ENCODE measurements at regions of chr5 and their contacts with region 1.

Region 1: DNA sequence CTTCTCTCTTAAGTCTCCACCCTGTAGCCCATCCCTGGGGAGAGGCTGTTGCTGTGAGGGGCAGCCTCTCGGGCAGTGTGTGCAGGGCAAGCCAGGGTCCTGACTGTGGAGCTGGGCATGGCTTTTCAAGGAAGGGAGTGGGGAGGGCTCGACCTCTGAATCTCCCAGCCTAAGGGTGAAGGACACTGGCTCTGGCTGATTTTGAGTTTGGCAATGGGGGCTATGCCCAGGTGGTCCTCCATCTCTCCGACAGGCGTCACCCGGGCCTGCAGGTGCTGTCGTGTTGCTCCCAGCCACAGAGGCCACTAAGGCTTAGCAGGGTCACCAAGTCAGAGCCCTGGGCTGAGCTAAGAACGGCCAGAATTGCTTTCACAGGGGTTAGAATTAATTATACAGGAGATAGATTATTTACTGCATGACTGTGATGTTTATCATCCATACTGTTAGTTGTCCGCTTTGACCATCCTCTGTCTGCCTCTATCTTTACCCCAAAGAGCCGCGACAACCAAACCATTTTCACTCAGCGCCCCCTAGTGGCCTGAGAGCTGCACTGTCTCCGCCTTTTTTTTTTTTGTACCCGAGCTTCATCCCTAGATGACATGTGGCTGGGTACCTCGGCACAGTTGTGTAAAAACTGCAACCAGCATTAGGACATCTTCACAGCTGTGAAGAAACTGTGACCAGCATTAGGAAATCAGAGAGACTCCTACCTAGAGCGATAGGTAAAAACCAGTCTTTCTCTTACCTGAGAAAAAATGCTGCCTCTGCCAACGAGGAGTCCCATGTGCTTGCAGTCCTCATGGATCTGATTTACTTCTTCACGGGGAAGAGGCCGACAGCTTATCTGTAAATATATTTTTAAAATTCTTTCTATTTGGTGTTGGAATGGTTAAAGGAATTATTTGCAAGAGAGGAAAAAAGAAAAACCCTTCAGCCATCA is 44.5 kb downstream of the AGXT2 start:
- DNase-seq: peak; percentile 79
- CTCF ChIP-seq: peak; percentile 72

Region 2: DNA sequence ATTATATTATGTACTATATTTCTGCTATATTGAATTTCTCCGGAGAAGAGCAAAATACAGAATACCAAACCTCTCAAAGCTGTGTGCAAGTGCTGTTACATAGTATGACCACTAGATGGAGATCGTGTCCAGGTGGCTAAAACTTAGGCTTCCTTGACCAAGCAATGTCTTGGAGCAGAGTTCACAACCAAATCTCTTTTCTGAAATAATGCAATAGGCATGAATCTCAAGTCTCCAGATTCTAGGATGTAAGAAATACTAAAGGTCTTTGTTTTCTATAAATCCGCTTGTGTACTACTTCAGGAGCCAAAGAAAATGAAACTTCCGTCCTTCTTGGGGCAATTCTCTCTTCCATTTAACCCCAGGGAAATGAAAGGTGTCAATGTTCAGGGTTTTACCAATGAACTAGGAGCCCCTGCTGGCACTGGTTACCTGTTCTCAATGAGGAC is 528.7 kb before region 1 on chr5:
- CTCF ChIA-PET with region 1: interaction called, 28 read pairs
- POLR2A ChIA-PET with region 1: no interaction called
- DNase-seq: peak; percentile 58
- CTCF ChIP-seq: peak; percentile 91

Region 3: GRCh38 chr5:34915139-34915855 is 88.0 kb before region 1 on chr5 and contains the starts of genes BRIX1 and RAD1:
- CTCF ChIA-PET with region 1: interaction called, 11 read pairs
- POLR2A ChIA-PET with region 1: no interaction called
- DNase-seq: peak; percentile 92
- CTCF ChIP-seq: no peak

Region 4: GRCh38 chr5:34977934-34978613 is 25.2 kb before region 1 on chr5:
- CTCF ChIA-PET with region 1: interaction called, 15 read pairs
- POLR2A ChIA-PET with region 1: no interaction called
- DNase-seq: peak; percentile 29
- CTCF ChIP-seq: no peak

Region 5: GRCh38 chr5:35016174-35017051 is 13.1 kb after region 1 on chr5:
- CTCF ChIA-PET with region 1: interaction called, 15 read pairs
- POLR2A ChIA-PET with region 1: no interaction called
- DNase-seq: no peak
- CTCF ChIP-seq: no peak

Region 6: DNA sequence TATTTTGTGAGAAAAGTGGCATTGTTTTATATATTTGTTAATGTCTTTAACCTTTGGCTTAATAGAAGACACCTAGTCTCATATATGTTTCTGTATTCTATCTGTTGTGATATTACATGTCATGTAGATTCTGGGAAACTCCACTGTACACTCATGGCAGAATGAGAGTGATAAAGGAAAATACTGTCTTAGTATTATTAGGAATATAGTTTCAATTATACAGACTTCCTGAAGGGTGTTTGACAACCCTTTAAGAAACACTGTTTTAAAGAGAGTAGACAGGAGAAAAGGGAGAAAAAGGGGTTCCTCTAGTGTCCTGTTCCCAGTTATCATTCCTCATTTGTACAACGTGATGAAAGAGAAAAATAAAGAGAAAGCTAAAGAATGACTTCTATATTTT is 572.3 kb after region 1 on chr5:
- CTCF ChIA-PET with region 1: no interaction called
- POLR2A ChIA-PET with region 1: no interaction called
- DNase-seq: no peak
- CTCF ChIP-seq: no peak

Measured in GM10248 (cell line).